ENCODE measurements at regions of chr1 and their contacts with region 1.

Region 1: GRCh38 chr1:3856908-3857790 is at the starts of genes CEP104 and DFFB:
- DNase-seq: peak; percentile 96
- ATAC-seq: peak; percentile 95
- H3K4me3 Mint-ChIP-seq: peak within 1 kb of the TSS; percentile 96
- H3K27ac Mint-ChIP-seq: peak within 1 kb of the TSS; percentile 45; the same call in 1 of the 2 replicates
- H3K4me1 Mint-ChIP-seq: peaks cover 18% of the 10 kb centered on the region
- H3K27me3 Mint-ChIP-seq: peaks cover 8% of the 10 kb centered on the region
- CTCF ChIP-seq: no peak
- total RNA-seq, gene CEP104: 38.0 to 38.8 TPM (median 38.2 TPM) in 3 replicates
- total RNA-seq, gene DFFB: 8.5 to 9.2 TPM (median 8.7 TPM) in 3 replicates

Region 2: DNA sequence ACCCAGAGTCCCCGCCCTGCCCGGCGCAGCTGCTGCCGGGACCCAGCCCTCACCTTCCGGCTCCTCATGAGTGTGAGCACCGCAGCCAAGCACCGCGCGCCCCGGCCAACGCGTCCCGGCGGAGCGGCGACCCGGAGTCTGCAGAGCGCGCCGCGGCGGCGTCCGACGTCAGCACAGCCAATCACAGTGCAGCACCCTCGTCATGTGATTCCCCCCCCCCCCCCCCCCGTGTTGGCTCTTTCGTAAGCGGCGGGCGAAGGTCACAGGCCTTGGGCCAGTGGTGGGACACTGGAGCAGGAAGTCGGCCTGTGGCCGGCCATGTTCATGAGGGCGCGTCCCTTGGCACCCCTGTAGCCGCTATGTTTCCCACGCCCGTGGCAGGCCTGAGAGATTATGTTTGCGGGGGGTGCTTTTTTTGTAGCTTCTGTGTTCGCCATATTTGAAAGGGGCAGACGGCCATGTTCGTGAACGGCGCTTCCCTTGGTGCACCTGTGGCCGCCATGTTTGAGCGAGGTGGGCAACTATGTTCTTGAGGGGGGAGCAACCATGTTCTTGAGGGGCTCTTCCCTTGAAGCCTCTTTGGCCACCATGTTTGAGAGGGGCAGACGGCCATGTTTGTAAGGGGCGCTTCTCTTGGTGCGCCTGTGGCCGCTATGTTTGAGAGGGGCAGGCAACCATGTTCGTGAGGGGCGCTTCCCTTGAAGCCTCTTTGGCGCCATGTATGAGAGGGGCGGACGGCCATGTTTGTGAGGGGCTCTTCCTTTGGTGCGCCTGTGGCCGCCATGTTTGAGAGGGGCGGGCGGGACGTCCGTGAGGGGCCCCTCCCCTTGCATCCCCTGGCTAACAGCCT is 43.2 kb after region 1 on chr1 and contains the start of gene C1orf174:
- CTCF ChIA-PET with region 1: interaction called, 17 read pairs
- POLR2A ChIA-PET with region 1: interaction called, 10 read pairs
- DNase-seq: peak; percentile 93
- ATAC-seq: peak; percentile 84
- H3K4me3 Mint-ChIP-seq: peak within 1 kb of the TSS; percentile 92
- H3K27ac Mint-ChIP-seq: peak within 1 kb of the TSS; percentile 99
- H3K4me1 Mint-ChIP-seq: peaks cover 23% of the 10 kb centered on the region
- H3K27me3 Mint-ChIP-seq: no peaks in the 10 kb centered on the region
- CTCF ChIP-seq: no peak
- total RNA-seq, gene C1orf174: 24.2 to 25.2 TPM (median 25.1 TPM) in 3 replicates